ENCODE measurements at regions of chr2 and their contacts with region 1.

Region 1: GRCh38 chr2:102473020-102473419 is at the start of gene SLC9A4:
- DNase-seq: peak in 13 of 14 experiments; percentile 6 to 66 (median 36)
- ATAC-seq: peak; percentile 70
- H3K4me3 ChIP-seq: no peak within 1 kb of the TSS
- H3K4me3 Mint-ChIP-seq: no peak within 1 kb of the TSS
- H3K27ac ChIP-seq: no peak within 1 kb of the TSS
- H3K27ac Mint-ChIP-seq: no peak within 1 kb of the TSS
- H3K4me1 ChIP-seq: no peaks in the 10 kb centered on the region
- H3K4me1 Mint-ChIP-seq: no peaks in the 10 kb centered on the region
- H3K27me3 ChIP-seq: peaks cover 0 to 20% of the 10 kb centered on the region in 2 experiments
- H3K27me3 Mint-ChIP-seq: peaks cover 20% of the 10 kb centered on the region
- CTCF ChIP-seq: peak; percentile 94
- total RNA-seq, gene SLC9A4: not detected

Region 2: DNA sequence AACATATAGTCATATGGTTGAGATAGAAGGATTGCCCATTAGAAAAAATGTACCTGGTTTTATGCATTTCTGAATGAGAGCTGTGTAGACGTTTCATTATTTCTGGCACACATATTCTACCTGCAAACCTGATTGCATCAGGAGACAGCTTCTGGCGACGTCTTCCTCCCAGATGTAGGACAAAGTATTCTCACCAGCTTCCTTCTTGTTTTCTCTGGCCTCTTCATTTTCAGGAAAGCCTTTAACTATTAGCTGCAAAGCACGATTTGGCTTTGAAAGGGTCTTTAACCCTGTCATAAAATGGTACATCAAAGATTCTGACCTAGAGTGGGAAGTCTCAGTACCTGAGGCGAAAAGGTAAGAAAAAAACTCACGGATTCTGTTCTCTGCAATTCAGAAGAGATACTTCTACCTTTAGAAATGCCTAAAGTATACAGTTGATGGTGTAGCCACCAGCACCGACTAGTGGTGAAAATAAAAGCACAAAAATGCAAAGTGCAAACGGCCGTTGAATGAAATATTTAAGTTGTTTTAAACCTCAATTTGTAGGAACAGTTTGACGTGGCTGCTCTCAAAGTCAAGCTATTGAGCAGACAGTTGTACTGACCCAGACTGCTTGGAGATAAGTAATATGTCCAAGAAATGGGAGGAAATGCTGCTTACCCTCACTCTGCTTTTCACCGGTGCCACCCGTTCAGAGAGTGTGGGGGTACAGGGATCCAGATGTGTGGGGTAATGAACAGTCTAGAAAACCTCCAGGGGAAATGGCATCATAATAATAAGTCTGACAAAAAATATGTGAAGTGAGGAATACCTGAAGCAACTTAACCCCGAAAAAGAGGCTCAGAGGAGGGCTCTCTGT is 29.8 kb before region 1 on chr2:
- CTCF ChIA-PET with region 1: no interaction called
- POLR2A ChIA-PET with region 1: no interaction called
- intact Hi-C with region 1: no loop called
- DNase-seq: peak in 13 of 14 experiments; percentile 11 to 75 (median 29)
- ATAC-seq: peak; percentile 78
- H3K4me3 ChIP-seq: no peak overlapping the region
- H3K4me3 Mint-ChIP-seq: no peak overlapping the region
- H3K27ac ChIP-seq: no peak overlapping the region
- H3K27ac Mint-ChIP-seq: no peak overlapping the region
- H3K4me1 ChIP-seq: no peaks in the 10 kb centered on the region
- H3K4me1 Mint-ChIP-seq: peaks cover 7% of the 10 kb centered on the region
- H3K27me3 ChIP-seq: no peaks in the 10 kb centered on the region
- H3K27me3 Mint-ChIP-seq: no peaks in the 10 kb centered on the region
- CTCF ChIP-seq: peak; percentile 84

Region 3: GRCh38 chr2:102615622-102616436 is 142.8 kb after region 1 on chr2:
- CTCF ChIA-PET with region 1: no interaction called
- POLR2A ChIA-PET with region 1: no interaction called
- intact Hi-C with region 1: loop called in 1 of 2 experiments (anchors 5 kb)
- DNase-seq: peak in 7 of 14 experiments; percentile 3 to 59 (median 19)
- ATAC-seq: peak; percentile 78
- H3K4me3 ChIP-seq: no peak overlapping the region
- H3K4me3 Mint-ChIP-seq: no peak overlapping the region
- H3K27ac ChIP-seq: no peak overlapping the region
- H3K27ac Mint-ChIP-seq: no peak overlapping the region
- H3K4me1 ChIP-seq: peaks cover 12% of the 10 kb centered on the region
- H3K4me1 Mint-ChIP-seq: peaks cover 15% of the 10 kb centered on the region
- H3K27me3 ChIP-seq: peaks cover 24 to 53% of the 10 kb centered on the region in 2 experiments
- H3K27me3 Mint-ChIP-seq: peaks cover 55% of the 10 kb centered on the region
- CTCF ChIP-seq: peak; percentile 50